ENCODE measurements at regions of chr2 and their contacts with region 1.

Region 1: DNA sequence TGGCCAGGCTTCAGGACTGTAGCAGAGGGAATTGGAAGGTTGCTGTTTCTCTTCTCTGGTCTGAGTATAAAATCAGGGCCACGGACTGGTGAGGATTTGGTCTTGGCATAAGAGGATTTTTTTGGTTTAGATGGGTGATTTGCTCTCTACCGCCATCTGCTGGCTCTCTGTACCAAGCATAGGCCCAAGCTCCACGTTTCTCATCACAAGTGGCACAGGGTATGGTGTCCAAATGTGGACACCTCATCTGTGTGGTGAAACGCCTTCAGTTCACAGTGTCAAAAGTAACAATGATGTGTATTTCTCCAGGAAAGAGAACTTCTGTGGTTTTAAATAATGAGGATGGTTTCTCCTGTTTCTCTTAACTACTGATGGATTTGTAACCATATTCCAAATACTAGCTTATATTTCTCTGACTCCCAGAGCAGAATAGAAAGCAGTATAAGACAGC is 115.1 kb downstream of the EML6 start:
- DNase-seq: peak; percentile 73
- H3K4me3 Mint-ChIP-seq: no peak overlapping the region
- H3K27ac Mint-ChIP-seq: no peak overlapping the region
- H3K4me1 Mint-ChIP-seq: no peaks in the 10 kb centered on the region
- H3K27me3 Mint-ChIP-seq: no peaks in the 10 kb centered on the region

Region 2: GRCh38 chr2:54106631-54107454 is 731.8 kb before region 1 on chr2:
- CTCF ChIA-PET with region 1: interaction called, 22 read pairs
- POLR2A ChIA-PET with region 1: no interaction called
- intact Hi-C with region 1: loop called (anchors 1 kb)
- DNase-seq: peak; percentile 58
- H3K4me3 Mint-ChIP-seq: no peak overlapping the region
- H3K27ac Mint-ChIP-seq: no peak overlapping the region
- H3K4me1 Mint-ChIP-seq: peaks cover 5% of the 10 kb centered on the region
- H3K27me3 Mint-ChIP-seq: no peaks in the 10 kb centered on the region

Region 3: GRCh38 chr2:54416166-54416813 is 422.3 kb before region 1 on chr2:
- CTCF ChIA-PET with region 1: no interaction called
- POLR2A ChIA-PET with region 1: no interaction called
- intact Hi-C with region 1: no loop called
- DNase-seq: no peak
- H3K4me3 Mint-ChIP-seq: no peak overlapping the region
- H3K27ac Mint-ChIP-seq: no peak overlapping the region
- H3K4me1 Mint-ChIP-seq: no peaks in the 10 kb centered on the region
- H3K27me3 Mint-ChIP-seq: peaks cover 6% of the 10 kb centered on the region

Region 4: DNA sequence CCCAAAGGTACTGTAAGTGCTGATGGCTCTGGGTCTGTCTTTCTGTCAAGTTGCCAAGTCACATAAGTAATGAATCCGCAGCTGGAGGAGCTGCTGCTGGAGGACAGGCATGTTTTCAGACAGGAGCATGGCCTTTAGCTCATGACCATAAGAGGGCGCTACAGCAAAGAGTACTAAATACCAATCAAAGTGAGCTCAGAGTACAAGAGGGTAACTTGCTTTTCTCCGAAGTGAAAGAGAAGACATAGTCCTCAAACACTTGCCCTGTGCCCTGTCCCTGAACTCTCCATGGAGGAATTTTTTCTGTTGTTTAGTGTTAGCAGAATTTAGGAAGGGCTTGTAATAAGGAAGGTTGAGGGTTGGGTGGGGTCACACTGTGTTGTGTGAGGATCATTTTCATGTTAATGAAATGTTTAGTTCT is 173.2 kb before region 1 on chr2:
- CTCF ChIA-PET with region 1: interaction called, 65 read pairs
- POLR2A ChIA-PET with region 1: no interaction called
- intact Hi-C with region 1: loop called (anchors 2 kb)
- DNase-seq: peak; percentile 53
- H3K4me3 Mint-ChIP-seq: no peak overlapping the region
- H3K27ac Mint-ChIP-seq: no peak overlapping the region
- H3K4me1 Mint-ChIP-seq: peaks cover 2% of the 10 kb centered on the region
- H3K27me3 Mint-ChIP-seq: no peaks in the 10 kb centered on the region

Region 5: GRCh38 chr2:54763636-54764291 is 74.8 kb before region 1 on chr2:
- CTCF ChIA-PET with region 1: interaction called, 24 read pairs
- POLR2A ChIA-PET with region 1: no interaction called
- intact Hi-C with region 1: loop called (anchors 2 kb)
- DNase-seq: peak; percentile 51
- H3K4me3 Mint-ChIP-seq: no peak overlapping the region
- H3K27ac Mint-ChIP-seq: no peak overlapping the region
- H3K4me1 Mint-ChIP-seq: peaks cover 8% of the 10 kb centered on the region
- H3K27me3 Mint-ChIP-seq: peaks cover 2% of the 10 kb centered on the region

Region 6: DNA sequence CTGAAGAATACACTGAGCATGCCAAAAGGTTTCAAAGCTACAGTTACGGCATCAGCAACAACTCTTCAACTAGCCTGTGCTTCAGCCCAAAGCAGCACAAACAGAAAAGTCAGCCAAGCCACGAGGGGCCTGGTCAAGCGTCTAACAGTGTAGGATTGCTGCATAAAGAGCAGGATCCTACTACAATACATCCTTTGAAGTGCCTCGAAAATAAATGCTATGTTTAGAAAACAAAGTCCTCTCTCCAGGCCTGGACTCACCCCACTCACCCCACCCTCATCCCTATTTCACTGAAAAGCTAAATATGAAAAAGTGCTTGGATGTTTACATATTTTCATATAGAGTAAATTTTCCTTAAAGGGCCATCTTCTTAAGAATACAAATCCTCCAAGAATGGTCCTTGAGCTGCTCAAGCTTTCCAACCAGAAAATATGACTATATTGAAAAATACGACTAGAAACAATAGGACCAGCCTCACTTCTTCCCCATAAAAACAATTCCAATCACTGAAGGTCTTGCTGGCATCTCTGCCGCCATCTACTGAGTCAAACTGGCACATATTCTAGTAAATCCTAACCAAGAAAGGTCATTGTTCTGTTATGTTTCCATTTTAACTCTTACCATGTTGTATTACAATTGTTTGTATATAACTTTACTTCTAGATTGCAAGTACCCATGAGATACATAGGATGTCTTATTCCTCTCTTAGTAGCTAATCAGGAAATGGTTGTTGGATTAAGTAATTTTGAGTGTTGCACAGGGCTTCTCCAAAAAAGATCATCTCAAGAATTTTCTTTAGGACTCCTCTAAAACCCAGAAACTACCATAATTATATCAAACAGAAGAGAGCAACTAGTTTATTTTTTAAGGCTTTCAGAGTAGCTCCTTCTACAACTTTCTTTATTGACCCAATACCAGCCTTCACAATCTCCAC is 329.9 kb after region 1 on chr2:
- CTCF ChIA-PET with region 1: interaction called, 26 read pairs
- POLR2A ChIA-PET with region 1: no interaction called
- intact Hi-C with region 1: no loop called
- DNase-seq: peak; percentile 45
- H3K4me3 Mint-ChIP-seq: no peak overlapping the region
- H3K27ac Mint-ChIP-seq: no peak overlapping the region
- H3K4me1 Mint-ChIP-seq: peaks cover 3% of the 10 kb centered on the region
- H3K27me3 Mint-ChIP-seq: no peaks in the 10 kb centered on the region

Region 7: GRCh38 chr2:55175254-55176025 is 336.8 kb after region 1 on chr2:
- CTCF ChIA-PET with region 1: interaction called, 26 read pairs
- POLR2A ChIA-PET with region 1: no interaction called
- intact Hi-C with region 1: loop called (anchors 2 kb)
- DNase-seq: no peak
- H3K4me3 Mint-ChIP-seq: no peak overlapping the region
- H3K27ac Mint-ChIP-seq: no peak overlapping the region
- H3K4me1 Mint-ChIP-seq: peaks cover 10% of the 10 kb centered on the region
- H3K27me3 Mint-ChIP-seq: no peaks in the 10 kb centered on the region

Measured in activated CD4-positive, alpha-beta memory T cell treated with anti-CD3 and anti-CD28 coated beads for 36 hours (primary cell).